ENCODE measurements at regions of chrX and their contacts with region 1.

Region 1: GRCh38 chrX:64205735-64206491 is 405 bp upstream of the AMER1 start:
- DNase-seq: peak; percentile 93
- CTCF ChIP-seq: no peak

Region 2: GRCh38 chrX:64097891-64098290 is 108.0 kb before region 1 on chrX:
- in situ Hi-C with region 1: loop called (anchors 25 kb)
- DNase-seq: no peak
- CTCF ChIP-seq: no peak

Region 3: DNA sequence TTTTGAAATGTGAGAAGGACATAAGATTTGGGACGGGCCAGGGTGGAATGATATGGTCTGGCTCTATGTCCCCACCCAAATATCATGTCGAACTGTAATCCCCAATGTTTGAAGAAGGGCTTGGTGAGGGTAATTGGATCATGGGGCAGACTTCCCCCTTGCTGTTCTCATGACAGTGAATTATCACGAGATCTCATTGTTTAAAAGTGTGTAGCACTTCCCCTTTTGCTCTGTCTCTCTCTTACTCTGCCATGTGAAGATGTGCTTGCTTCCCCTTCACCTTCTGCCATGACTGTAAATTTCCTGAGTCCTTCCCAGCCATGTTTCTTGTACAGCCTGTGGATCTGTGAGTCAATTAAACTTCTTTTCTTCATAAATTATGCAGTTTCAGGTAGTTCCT is 171.8 kb after region 1 on chrX:
- in situ Hi-C with region 1: no loop called
- DNase-seq: no peak
- CTCF ChIP-seq: no peak

Measured in GM13977 (cell line).